ENCODE measurements at regions of chr10 and their contacts with region 1.

Region 1: DNA sequence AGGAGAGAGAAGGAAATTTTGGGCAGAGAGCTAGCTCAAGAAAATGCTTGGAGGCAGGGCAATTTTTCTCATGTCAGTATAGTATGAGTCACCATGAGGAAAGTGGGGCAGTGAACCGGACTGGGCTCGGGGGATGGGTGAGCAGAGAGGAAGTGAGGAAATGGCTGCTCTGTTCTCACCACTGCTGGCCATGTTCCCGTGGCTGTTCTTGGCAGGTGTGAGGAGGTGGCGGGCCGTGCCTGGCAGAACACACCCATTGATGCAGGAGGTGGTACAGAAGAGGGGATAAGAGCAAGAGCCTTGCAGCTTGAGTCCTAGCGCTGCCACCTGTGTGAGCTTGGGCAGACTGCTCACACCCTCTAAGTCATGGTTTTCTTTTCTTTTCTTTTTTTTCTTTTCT is 304.4 kb upstream of the LYZL1 start:
- DNase-seq: peak; percentile 93
- H3K4me3 ChIP-seq: no peak overlapping the region
- H3K27ac ChIP-seq: no peak overlapping the region
- H3K4me1 ChIP-seq: peaks cover 7% of the 10 kb centered on the region
- H3K27me3 ChIP-seq: peaks cover 0 to 2% of the 10 kb centered on the region in 2 experiments
- CTCF ChIP-seq: no peak
- POLR2A ChIP-seq: no peak

Region 2: DNA sequence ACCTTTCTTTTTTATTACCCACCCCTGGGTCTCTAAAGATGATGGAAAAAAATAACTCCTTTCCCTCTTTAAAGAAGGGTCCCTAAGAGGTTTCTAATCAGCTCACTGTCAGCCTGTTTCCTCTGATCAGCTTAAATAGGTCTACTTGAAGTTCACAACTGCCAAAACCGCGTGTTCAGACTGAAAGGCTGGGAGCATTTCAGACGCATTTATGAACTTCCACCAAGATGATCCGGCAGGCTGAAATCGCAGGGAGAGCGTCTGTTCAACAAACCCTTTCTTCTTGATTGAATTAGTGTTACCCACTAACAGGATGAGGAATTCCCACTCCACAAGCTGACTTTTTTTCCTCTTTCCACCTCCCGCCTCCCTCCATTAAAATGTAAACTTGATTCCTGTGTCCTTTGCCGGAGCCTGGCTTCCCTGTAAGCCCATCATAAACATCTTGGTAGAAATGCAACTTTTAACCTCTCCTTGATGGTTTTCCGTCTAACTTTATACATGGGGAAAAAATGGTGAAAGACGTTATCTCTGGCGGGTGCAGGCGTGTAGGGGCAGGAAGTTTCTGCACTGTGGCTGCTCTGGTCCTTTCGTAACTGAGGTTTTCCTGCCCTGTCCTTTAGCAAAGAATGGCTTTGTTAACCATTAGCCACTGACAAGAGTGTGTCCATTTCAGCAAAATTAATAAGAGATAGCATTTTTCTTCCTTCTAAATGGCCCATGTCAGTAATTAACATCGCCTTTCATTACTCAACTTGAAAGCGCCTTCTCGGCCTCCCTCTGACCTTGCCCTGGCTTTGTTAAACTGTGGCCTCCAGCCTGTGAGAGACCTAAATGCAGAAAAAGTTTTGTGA is 176.4 kb before region 1 on chr10:
- CTCF ChIA-PET with region 1: no interaction called
- POLR2A ChIA-PET with region 1: no interaction called
- dilution Hi-C with region 1: no loop called
- intact Hi-C with region 1: loop called (anchors 10 kb)
- DNase-seq: no peak
- H3K4me3 ChIP-seq: no peak overlapping the region
- H3K27ac ChIP-seq: no peak overlapping the region
- H3K4me1 ChIP-seq: no peaks in the 10 kb centered on the region
- H3K27me3 ChIP-seq: peaks cover 16 to 22% of the 10 kb centered on the region in 2 experiments
- CTCF ChIP-seq: no peak
- POLR2A ChIP-seq: no peak

Region 3: DNA sequence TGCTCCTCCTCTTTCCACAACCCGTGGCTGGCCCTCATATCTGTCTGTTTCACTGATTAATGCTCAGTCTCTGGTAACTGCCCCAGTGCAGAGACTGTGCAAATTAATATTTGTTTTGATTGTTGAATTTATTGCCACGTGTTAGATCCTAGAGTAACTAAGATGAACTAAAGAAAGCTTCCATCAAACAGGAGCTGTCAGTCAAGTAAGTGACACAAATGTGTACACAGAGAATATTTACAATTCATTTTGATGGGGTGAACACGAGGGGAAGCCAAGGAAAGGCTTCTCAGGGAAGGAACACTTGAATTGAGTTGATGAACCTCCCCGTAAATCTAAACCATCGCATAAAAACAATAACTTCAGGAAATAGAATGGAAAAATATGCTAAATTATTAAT is 124.6 kb before region 1 on chr10:
- CTCF ChIA-PET with region 1: no interaction called
- POLR2A ChIA-PET with region 1: no interaction called
- dilution Hi-C with region 1: no loop called
- intact Hi-C with region 1: no loop called
- DNase-seq: no peak
- H3K4me3 ChIP-seq: no peak overlapping the region
- H3K27ac ChIP-seq: no peak overlapping the region
- H3K4me1 ChIP-seq: no peaks in the 10 kb centered on the region
- H3K27me3 ChIP-seq: no peaks in the 10 kb centered on the region
- CTCF ChIP-seq: no peak
- POLR2A ChIP-seq: no peak

Region 4: GRCh38 chr10:28906934-28907333 is 77.5 kb before region 1 on chr10:
- CTCF ChIA-PET with region 1: no interaction called
- POLR2A ChIA-PET with region 1: no interaction called
- dilution Hi-C with region 1: no loop called
- intact Hi-C with region 1: loop called (anchors 5 kb)
- DNase-seq: peak; percentile 71
- H3K4me3 ChIP-seq: no peak overlapping the region
- H3K27ac ChIP-seq: peak overlapping the region; percentile 44
- H3K4me1 ChIP-seq: peaks cover 26% of the 10 kb centered on the region
- H3K27me3 ChIP-seq: no peaks in the 10 kb centered on the region
- CTCF ChIP-seq: no peak
- POLR2A ChIP-seq: no peak

Region 5: DNA sequence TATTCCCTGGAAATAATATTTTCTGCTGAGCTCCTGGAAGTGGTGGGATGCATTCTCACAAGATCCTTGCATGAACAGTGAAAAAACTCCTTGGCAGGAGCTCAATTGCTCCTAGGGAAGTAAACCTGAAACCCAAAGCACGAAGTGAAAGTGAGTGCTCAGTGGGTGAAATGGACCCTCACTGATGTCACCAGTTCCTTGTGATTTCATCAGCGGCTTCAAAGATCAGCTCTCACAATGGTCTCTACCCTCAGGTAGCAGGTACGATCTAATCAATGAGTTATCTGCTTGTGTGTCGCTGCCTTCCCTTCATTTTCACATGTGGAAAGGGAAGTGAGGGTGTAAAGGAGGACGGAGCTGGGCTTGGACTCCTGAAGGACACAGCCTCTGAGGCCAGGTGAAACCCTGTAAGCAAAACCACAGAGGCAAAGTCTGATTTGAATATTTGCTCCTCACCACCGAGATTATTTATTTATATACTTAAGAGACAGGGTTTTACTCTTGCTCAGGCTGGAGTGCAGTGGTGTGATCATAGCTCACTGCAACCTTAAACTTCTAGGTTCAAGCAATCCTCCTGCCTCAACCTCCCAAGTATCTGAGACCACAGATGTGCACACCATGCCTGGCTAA is 49.0 kb after region 1 on chr10:
- CTCF ChIA-PET with region 1: no interaction called
- POLR2A ChIA-PET with region 1: no interaction called
- dilution Hi-C with region 1: no loop called
- intact Hi-C with region 1: no loop called
- DNase-seq: no peak
- H3K4me3 ChIP-seq: no peak overlapping the region
- H3K27ac ChIP-seq: no peak overlapping the region
- H3K4me1 ChIP-seq: no peaks in the 10 kb centered on the region
- H3K27me3 ChIP-seq: peaks cover 0 to 4% of the 10 kb centered on the region in 2 experiments
- CTCF ChIP-seq: no peak
- POLR2A ChIP-seq: no peak